ENCODE measurements at regions of chr5 and their contacts with region 1.

Region 1: GRCh38 chr5:9519537-9519936 is 26.3 kb downstream of the SEMA5A start:
- DNase-seq: no peak
- H3K4me3 ChIP-seq: no peak overlapping the region
- H3K27ac ChIP-seq: no peak overlapping the region
- H3K27me3 ChIP-seq: no peaks in the 10 kb centered on the region
- CTCF ChIP-seq: no peak

Region 2: DNA sequence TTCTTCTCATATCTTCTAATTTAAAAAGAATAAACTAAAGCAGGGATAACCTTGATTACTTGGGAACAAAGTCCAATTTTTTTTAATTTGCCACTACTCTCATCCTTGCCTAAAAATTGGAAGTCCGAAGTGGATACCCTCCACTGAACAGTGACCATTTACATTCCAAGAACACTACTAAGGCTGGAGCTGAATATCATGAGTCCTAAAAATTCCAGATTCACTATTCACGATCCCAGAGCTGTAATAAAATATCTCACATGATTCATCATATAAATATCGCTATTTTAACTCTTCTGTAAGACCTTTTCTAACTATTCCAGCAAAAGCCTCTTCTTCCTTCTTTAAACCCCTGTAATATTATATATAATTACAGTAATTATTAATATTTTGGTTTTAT is 672.8 kb after region 1 on chr5:
- CTCF ChIA-PET with region 1: no interaction called
- POLR2A ChIA-PET with region 1: interaction called, 13 read pairs
- DNase-seq: peak; percentile 45
- H3K4me3 ChIP-seq: no peak overlapping the region
- H3K27ac ChIP-seq: no peak overlapping the region
- H3K27me3 ChIP-seq: no peaks in the 10 kb centered on the region
- CTCF ChIP-seq: no peak

Measured in AG04450 (cell line).